ENCODE measurements at regions of chr6 and their contacts with region 1.

Region 1: GRCh38 chr6:133726188-133726587 is 162.7 kb upstream of the TCF21 start:
- DNase-seq: no peak
- H3K4me3 ChIP-seq: no peak overlapping the region
- H3K27ac ChIP-seq: no peak overlapping the region
- H3K4me1 ChIP-seq: no peaks in the 10 kb centered on the region; the same call in 1 of the 2 replicates
- H3K27me3 ChIP-seq: no peaks in the 10 kb centered on the region
- CTCF ChIP-seq: no peak

Region 2: DNA sequence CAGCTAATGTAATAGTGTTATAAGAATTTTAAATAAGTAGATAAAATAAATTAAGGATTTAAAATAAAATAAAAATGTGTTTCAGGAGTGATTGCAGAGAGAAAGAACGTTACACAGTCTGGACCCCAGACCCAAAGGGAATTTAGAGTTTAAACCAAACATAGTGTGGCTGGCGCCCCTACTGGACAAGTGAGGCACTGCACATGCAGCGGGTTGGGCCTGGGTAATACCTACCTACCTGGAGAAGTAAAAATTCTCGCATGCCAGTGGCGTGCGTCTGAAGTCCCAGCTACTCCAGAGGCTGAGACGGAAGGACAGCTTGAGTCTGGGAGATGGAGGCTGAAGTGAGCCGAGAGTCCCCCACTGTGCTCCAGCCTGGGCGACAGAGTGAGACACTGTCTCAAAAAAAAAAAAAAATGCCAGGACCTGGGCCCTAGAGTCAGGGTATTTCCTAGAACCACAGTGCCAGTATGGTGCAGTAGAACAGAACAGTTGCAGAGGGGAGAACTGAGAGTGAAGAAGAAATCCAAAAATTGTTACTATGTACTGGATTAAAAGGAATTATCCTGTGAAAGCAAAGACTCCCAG is 91.4 kb after region 1 on chr6:
- CTCF ChIA-PET with region 1: no interaction called
- POLR2A ChIA-PET with region 1: no interaction called
- intact Hi-C with region 1: no loop called
- DNase-seq: no peak
- H3K4me3 ChIP-seq: no peak overlapping the region
- H3K27ac ChIP-seq: no peak overlapping the region
- H3K4me1 ChIP-seq: no peaks in the 10 kb centered on the region
- H3K27me3 ChIP-seq: no peaks in the 10 kb centered on the region
- CTCF ChIP-seq: peak; percentile 70

Region 3: DNA sequence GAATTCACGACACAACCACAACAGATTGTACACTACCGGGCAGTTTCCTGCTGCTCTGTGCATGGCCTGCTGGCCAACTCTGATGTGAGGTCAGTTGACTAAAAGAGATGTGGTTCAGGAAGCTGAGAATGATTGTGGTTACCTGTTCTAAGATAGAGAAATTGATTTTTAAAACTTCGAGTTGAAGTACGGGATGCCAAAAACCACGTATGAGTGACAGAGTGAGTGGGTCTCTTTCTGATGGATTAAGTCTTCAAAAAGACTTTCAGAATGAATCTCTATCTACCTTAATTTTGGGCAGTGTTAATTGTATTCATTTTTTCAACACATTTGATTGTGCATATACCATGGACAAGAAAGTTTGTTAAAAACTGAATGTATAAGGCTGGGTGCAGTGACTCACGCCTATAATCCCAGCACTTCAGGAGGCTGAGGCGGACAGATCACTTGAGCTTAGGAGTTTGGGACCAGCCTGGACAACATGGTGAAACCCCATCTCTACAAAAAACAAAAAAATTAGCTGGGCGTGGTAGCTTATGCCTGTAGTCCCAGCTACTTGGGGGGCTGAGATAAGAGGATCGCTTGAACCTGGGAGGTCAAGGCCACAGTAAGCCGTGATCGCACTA is 470.5 kb after region 1 on chr6:
- CTCF ChIA-PET with region 1: no interaction called
- POLR2A ChIA-PET with region 1: interaction called, 32 read pairs
- intact Hi-C with region 1: no loop called
- DNase-seq: no peak
- H3K4me3 ChIP-seq: no peak overlapping the region
- H3K27ac ChIP-seq: no peak overlapping the region
- H3K4me1 ChIP-seq: peaks cover 17% of the 10 kb centered on the region
- H3K27me3 ChIP-seq: no peaks in the 10 kb centered on the region
- CTCF ChIP-seq: no peak

Measured in PC-9 (cell line).